K562 (cell line): ENCODE measurements at regions of chr7 and their contacts with region 1.

Region 1: GRCh38 chr7:74417419-74417971 is 36.2 kb upstream of the GTF2IRD1 start:
- DNase-seq: peak; percentile 83 to 94 (median 92)
- ATAC-seq: peak; percentile 96
- H3K4me3 ChIP-seq: no peak overlapping the region
- H3K27ac ChIP-seq: no peak overlapping the region
- H3K4me1 ChIP-seq: peaks cover 0 to 8% of the 10 kb centered on the region in 2 experiments; a peak in 1 of 5 replicates
- H3K27me3 ChIP-seq: peaks cover 0 to 2% of the 10 kb centered on the region in 2 experiments; a peak in 1 of 5 replicates
- CTCF ChIP-seq: peak; percentile 96 to 98 (median 98)
- EP300 ChIP-seq: no peak
- POLR2A ChIP-seq: no peak
- RAD21 ChIP-seq: peak; percentile 98

Region 2: DNA sequence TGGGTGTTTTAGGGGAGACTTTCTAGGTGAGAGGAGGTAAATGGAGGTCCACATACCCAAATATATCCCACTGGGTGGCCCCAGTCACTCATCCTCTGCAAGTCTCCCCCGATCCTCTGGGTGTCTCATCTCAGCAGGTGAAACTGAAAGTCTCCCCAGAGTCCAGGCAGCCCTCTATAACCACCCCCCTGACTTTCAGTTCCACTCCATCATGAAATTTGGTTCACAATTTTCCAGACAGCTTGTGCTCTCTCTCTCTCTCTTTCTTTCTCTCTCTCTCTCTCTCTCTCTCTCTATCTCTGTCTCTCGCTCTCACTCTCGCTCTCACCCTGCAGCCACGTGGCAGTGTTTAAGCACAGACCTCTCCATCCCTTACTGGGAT is 446.2 kb before region 1 on chr7:
- CTCF ChIA-PET with region 1: no interaction called
- POLR2A ChIA-PET with region 1: no interaction called
- in situ Hi-C with region 1: no loop called
- intact Hi-C with region 1: no loop called
- DNase-seq: no peak
- ATAC-seq: peak; percentile 56
- H3K4me3 ChIP-seq: no peak overlapping the region
- H3K27ac ChIP-seq: no peak overlapping the region
- H3K4me1 ChIP-seq: peaks cover 0 to 3% of the 10 kb centered on the region in 2 experiments; a peak in 1 of 5 replicates
- H3K27me3 ChIP-seq: peaks cover 18 to 57% of the 10 kb centered on the region in 2 experiments
- CTCF ChIP-seq: 0 out of 6 replicates have a peak, but pooled peaks of 1 of the 3 experiments have one; percentile 13
- EP300 ChIP-seq: no peak
- POLR2A ChIP-seq: no peak
- RAD21 ChIP-seq: no peak

Region 3: DNA sequence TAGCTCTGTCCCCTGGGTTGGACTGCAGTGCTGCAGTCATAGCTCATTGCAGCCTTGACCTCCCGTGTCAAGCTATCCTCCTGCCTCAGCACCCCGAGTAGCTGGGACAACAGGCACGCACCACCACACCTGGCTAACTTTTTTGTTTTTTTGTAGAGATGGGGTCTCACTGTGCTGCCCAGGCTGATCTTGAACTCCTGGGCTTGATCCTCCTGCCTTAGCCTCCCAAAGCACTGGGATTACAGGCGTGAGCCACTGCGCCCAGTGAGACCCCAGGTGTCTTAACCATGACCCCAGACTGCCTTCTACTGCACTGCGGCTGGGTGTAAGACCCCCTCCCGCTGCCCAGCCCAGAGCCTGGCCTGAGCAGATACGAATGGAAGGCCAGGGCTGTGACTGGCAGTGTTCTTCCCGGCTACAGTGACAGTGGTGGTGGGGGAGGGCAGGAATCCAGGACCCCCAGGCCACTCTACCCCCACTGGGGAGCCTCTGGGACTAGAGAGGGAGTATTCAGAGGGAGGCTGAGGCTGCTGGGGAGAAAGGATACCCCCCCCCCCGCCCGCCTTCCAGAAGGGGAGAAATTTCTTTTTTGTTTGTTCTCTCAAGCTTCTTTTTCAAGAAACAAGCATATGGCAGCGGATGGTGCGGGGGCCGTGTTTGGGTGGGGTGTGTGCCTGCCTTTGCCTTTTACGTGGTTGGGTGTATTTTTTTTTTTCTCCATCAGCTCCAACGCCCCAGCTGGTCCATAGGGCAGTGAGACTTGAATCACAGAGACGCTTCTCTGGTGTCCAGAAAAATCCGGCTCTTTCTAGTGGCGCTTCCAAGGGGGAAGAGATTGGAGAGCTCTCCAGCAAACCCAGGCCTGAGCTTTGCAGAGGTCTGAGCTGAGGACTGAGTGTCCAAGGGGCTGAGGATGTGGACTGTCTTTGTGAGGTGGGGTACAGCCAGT is 72.8 kb after region 1 on chr7:
- CTCF ChIA-PET with region 1: no interaction called
- POLR2A ChIA-PET with region 1: no interaction called
- in situ Hi-C with region 1: no loop called
- intact Hi-C with region 1: no loop called
- DNase-seq: no peak
- ATAC-seq: peak; percentile 21; the same call in 2 of the 3 replicates
- H3K4me3 ChIP-seq: no peak overlapping the region
- H3K27ac ChIP-seq: no peak overlapping the region
- H3K4me1 ChIP-seq: peaks cover 0 to 3% of the 10 kb centered on the region in 2 experiments; a peak in 1 of 5 replicates
- H3K27me3 ChIP-seq: no peaks in the 10 kb centered on the region
- CTCF ChIP-seq: no peak
- EP300 ChIP-seq: no peak
- POLR2A ChIP-seq: no peak
- RAD21 ChIP-seq: no peak

Region 4: GRCh38 chr7:74544706-74545469 is 127.4 kb after region 1 on chr7:
- CTCF ChIA-PET with region 1: no interaction called
- POLR2A ChIA-PET with region 1: no interaction called
- in situ Hi-C with region 1: no loop called
- intact Hi-C with region 1: loop called (anchors 2 kb)
- DNase-seq: peak; percentile 60 to 74 (median 70)
- ATAC-seq: peak; percentile 91
- H3K4me3 ChIP-seq: no peak overlapping the region
- H3K27ac ChIP-seq: no peak overlapping the region
- H3K4me1 ChIP-seq: no peaks in the 10 kb centered on the region; a peak in 1 of 5 replicates
- H3K27me3 ChIP-seq: no peaks in the 10 kb centered on the region
- CTCF ChIP-seq: peak; percentile 66 to 79 (median 71)
- EP300 ChIP-seq: no peak
- POLR2A ChIP-seq: no peak
- RAD21 ChIP-seq: peak; percentile 34 to 65; a peak in 3 of 4 replicates

Region 5: GRCh38 chr7:74569501-74570075 is 152.1 kb after region 1 on chr7:
- CTCF ChIA-PET with region 1: interaction called, 11 read pairs
- POLR2A ChIA-PET with region 1: no interaction called
- in situ Hi-C with region 1: no loop called
- intact Hi-C with region 1: loop called (anchors 1 kb)
- DNase-seq: peak in 1 of 4 experiments; percentile 24
- ATAC-seq: no peak
- H3K4me3 ChIP-seq: no peak overlapping the region
- H3K27ac ChIP-seq: no peak overlapping the region
- H3K4me1 ChIP-seq: peaks cover 9 to 19% of the 10 kb centered on the region in 2 experiments; a peak in 4 of 5 replicates
- H3K27me3 ChIP-seq: no peaks in the 10 kb centered on the region
- CTCF ChIP-seq: no peak
- EP300 ChIP-seq: no peak
- POLR2A ChIP-seq: no peak
- RAD21 ChIP-seq: no peak

Region 6: DNA sequence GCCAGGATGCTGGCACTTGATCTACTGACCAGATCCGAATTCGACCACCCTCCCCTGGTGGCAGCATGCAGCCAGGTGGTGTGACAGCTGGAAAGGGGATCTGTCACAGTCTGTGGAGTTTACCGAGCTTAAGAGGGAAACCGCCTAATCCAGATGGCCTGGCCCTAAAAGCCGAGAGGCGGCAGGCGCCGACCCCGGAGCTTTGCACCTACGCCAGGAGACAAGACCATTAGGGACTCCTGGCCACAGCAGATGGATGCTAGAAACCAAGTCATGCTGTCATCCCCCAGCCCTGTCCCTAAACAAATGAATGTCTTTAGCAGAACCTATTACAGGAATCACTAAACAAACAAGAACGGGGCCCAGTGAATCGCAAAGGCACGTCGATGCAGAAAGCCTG is 628.4 kb after region 1 on chr7:
- CTCF ChIA-PET with region 1: interaction called, 8 read pairs
- POLR2A ChIA-PET with region 1: no interaction called
- in situ Hi-C with region 1: loop called (anchors 25 kb)
- intact Hi-C with region 1: loop called (anchors 2 kb)
- DNase-seq: no peak
- ATAC-seq: no peak
- H3K4me3 ChIP-seq: no peak overlapping the region
- H3K27ac ChIP-seq: no peak overlapping the region
- H3K4me1 ChIP-seq: peaks cover 0 to 17% of the 10 kb centered on the region in 2 experiments; a peak in 1 of 5 replicates
- H3K27me3 ChIP-seq: no peaks in the 10 kb centered on the region
- CTCF ChIP-seq: no peak
- EP300 ChIP-seq: no peak
- POLR2A ChIP-seq: no peak
- RAD21 ChIP-seq: no peak